Common myeloid progenitor, CD34-positive (primary cell): ENCODE measurements at regions of chr6 and their contacts with region 1.

Region 1: GRCh38 chr6:42879372-42880239 is at the start of gene RPL7L1:
- DNase-seq: peak; percentile 90 to 94 (median 91)
- H3K4me3 ChIP-seq: peak within 1 kb of the TSS; percentile 63 to 99 (median 92)
- H3K27ac ChIP-seq: peak within 1 kb of the TSS; percentile 93 to 97
- H3K4me1 ChIP-seq: peaks cover 0 to 19% (median 12%) of the 10 kb centered on the region in 4 experiments
- H3K27me3 ChIP-seq: no peaks in the 10 kb centered on the region

Region 2: DNA sequence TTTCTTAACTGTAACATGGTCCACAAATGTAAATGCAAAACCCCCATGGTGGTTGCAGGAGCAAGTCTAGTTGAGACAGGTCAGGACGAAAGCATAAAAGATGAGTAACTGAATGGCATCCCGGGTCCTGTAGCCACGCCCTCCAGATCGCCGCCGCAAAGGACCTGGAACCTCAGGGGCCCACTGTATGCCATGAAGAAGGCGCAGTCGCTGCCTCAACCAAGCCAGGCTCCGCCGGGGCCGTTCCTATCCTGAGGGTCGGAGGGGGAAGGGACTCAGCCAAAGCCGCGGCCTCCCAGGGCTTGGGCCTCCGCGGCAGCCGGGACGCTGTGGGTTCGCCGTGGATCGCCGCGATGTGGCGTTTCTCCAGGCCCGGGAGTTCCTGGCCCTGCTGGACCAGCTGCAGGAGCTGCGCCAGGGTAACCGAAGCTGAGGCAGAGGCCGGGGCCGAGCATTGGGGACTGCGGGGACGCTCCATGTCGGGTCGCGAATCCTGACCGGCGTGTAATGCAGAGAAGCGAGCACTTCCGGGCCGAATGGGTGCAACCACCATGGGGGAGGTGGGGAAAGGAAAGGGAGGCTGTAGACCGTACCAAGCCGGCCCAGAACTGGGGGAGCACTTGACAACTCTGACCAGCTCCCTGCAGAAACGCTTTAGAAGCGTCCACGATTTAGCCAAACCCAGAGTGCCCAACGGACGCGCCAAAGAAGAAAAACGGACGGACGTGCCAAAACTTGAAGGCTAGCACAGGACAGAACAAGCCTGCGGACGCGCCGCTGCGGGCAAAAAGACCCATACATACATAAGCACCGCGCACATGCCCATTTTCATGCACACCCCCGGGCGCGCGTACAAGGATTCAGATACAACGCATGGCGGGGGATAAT is 10.9 kb after region 1 on chr6:
- CTCF ChIA-PET with region 1: interaction called, 17 read pairs
- POLR2A ChIA-PET with region 1: interaction called, 13 read pairs
- DNase-seq: peak; percentile 87 to 94 (median 93)
- H3K4me3 ChIP-seq: peak overlapping the region; percentile 48 to 97 (median 82)
- H3K27ac ChIP-seq: peak overlapping the region; percentile 75 to 84
- H3K4me1 ChIP-seq: peaks cover 14 to 43% (median 35%) of the 10 kb centered on the region in 4 experiments
- H3K27me3 ChIP-seq: no peaks in the 10 kb centered on the region

Region 3: GRCh38 chr6:43129434-43130194 is 250.0 kb after region 1 on chr6:
- CTCF ChIA-PET with region 1: no interaction called
- POLR2A ChIA-PET with region 1: no interaction called
- DNase-seq: peak in 2 of 3 donors; percentile 55 to 58
- H3K4me3 ChIP-seq: no peak overlapping the region
- H3K27ac ChIP-seq: no peak overlapping the region
- H3K4me1 ChIP-seq: peaks cover 0 to 5% (median 0%) of the 10 kb centered on the region in 4 experiments
- H3K27me3 ChIP-seq: no peaks in the 10 kb centered on the region